T-cell (primary cell): ENCODE measurements at regions of chr14 and their contacts with region 1.

Region 1: DNA sequence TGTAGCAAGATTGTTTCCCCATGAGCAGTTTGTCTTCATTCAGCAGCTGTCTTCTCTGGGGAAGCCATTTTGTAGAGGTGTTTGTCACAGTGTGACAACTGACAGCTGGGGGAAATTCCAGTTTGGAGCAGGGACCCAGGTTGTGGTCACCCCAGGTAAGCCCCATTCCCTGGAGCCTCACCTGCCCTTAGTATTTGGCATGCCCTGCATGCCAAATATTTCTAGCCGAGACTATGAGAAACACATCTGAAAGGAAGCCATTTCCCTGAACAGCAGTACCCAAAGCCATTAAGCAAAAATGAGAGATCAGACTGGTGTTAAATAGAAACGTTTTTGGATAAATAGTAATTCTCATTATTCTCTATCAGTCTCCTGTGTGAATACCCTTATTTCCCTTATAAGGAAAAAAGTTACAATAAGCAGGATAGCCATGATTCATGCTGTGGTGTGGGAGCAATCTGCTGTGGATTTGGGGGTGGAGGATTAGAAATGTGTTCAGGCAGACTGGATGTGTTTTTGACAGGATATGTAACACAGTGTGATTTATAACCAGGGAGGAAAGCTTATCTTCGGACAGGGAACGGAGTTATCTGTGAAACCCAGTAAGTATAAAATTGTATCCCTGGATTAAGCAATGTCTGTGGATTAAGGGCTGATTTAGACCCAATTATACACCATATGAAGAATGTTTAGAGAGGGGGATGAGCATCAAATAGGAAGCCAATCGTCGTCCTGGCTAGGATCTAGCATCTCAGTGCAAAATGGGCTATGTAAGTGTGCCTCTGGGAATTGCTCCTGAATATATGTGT is 68.9 kb downstream of the DAD1 start:
- DNase-seq: peak in 1 of 35 experiments; percentile 49
- ATAC-seq: peak; percentile 17 to 34 (median 22)
- H3K4me3 ChIP-seq: peak overlapping the region; percentile 47 to 60
- H3K4me3 Mint-ChIP-seq: peak overlapping the region; percentile 82 to 86 (median 84)
- H3K27ac ChIP-seq: peak overlapping the region; percentile 90
- H3K27ac Mint-ChIP-seq: peak overlapping the region; percentile 99
- H3K4me1 ChIP-seq: peaks cover 78 to 79% of the 10 kb centered on the region in 2 experiments
- H3K4me1 Mint-ChIP-seq: peaks cover 95 to 99% (median 96%) of the 10 kb centered on the region in 3 donors
- H3K27me3 ChIP-seq: no peaks in the 10 kb centered on the region
- H3K27me3 Mint-ChIP-seq: no peaks in the 10 kb centered on the region

Region 2: DNA sequence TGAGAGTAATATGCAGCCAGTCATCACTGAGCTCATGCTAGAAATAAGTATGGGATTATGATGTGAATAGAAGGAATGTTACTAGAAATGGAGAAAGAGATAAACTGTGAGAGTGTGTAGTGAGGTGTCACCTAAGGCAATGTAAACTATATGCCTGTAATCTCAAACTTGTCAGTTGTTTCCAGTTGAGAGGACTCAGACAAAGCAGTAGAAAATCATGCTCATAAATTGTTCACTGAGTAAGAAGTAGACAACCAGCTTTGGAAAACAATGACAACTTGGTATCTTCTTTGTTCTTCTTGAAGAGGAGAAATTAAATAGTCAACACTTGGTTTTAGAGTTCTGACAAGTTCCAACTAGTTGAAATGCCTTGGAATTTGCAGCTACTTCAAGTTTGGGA is 698.0 kb before region 1 on chr14:
- CTCF ChIA-PET with region 1: no interaction called
- POLR2A ChIA-PET with region 1: interaction called in 1 of 2 experiments, 12 read pairs
- DNase-seq: no peak
- ATAC-seq: no peak
- H3K4me3 ChIP-seq: no peak overlapping the region
- H3K4me3 Mint-ChIP-seq: no peak overlapping the region
- H3K27ac ChIP-seq: no peak overlapping the region
- H3K27ac Mint-ChIP-seq: no peak overlapping the region
- H3K4me1 ChIP-seq: no peaks in the 10 kb centered on the region
- H3K4me1 Mint-ChIP-seq: peaks cover 4 to 11% (median 6%) of the 10 kb centered on the region in 3 donors
- H3K27me3 ChIP-seq: peaks cover 0 to 2% of the 10 kb centered on the region in 2 experiments
- H3K27me3 Mint-ChIP-seq: peaks cover 21 to 25% of the 10 kb centered on the region in 2 donors

Region 3: GRCh38 chr14:22505697-22506377 is 14.2 kb before region 1 on chr14:
- CTCF ChIA-PET with region 1: interaction called, 8 to 11 read pairs
- POLR2A ChIA-PET with region 1: interaction called, 11 to 45 read pairs
- DNase-seq: peak in 1 of 35 experiments; percentile 54
- ATAC-seq: peak; percentile 17 to 55 (median 46)
- H3K4me3 ChIP-seq: peak overlapping the region; percentile 52 to 58
- H3K4me3 Mint-ChIP-seq: peak overlapping the region; percentile 82 to 86 (median 83)
- H3K27ac ChIP-seq: peak overlapping the region; percentile 90
- H3K27ac Mint-ChIP-seq: peak overlapping the region; percentile 95 to 96
- H3K4me1 ChIP-seq: peaks cover 26 to 55% of the 10 kb centered on the region in 2 experiments
- H3K4me1 Mint-ChIP-seq: peaks cover 55 to 84% (median 75%) of the 10 kb centered on the region in 3 donors
- H3K27me3 ChIP-seq: no peaks in the 10 kb centered on the region
- H3K27me3 Mint-ChIP-seq: no peaks in the 10 kb centered on the region

Region 4: DNA sequence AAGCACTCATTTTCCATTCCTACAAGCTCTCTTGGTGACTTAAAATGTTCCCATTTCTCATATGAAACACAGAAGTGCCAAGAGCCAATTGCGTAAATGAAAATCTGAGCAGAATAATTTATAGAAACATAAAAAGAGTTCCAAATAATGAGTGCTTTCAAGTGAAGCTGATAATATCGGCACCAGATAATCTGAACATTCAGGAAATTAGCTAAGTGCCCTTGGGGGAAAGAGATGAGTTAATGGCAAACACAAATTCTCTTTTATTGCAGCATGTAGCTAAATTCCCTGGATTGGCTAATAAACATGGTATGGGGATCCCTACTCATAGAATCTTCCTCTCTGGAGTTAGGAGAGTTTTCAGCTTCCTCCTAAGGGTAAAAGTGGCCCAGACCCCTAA is 22.3 kb after region 1 on chr14:
- CTCF ChIA-PET with region 1: interaction called, 6 read pairs
- POLR2A ChIA-PET with region 1: interaction called, 4 to 10 read pairs
- DNase-seq: no peak
- ATAC-seq: no peak
- H3K4me3 ChIP-seq: peak overlapping the region; percentile 35 to 38
- H3K4me3 Mint-ChIP-seq: peak overlapping the region; percentile 77 to 86 (median 83)
- H3K27ac ChIP-seq: peak overlapping the region; percentile 88
- H3K27ac Mint-ChIP-seq: peak overlapping the region; percentile 98 to 99
- H3K4me1 ChIP-seq: peaks cover 92 to 95% of the 10 kb centered on the region in 2 experiments
- H3K4me1 Mint-ChIP-seq: peaks cover 98 to 100% (median 100%) of the 10 kb centered on the region in 3 donors
- H3K27me3 ChIP-seq: no peaks in the 10 kb centered on the region
- H3K27me3 Mint-ChIP-seq: no peaks in the 10 kb centered on the region

Region 5: GRCh38 chr14:22556990-22557623 is 37.0 kb after region 1 on chr14:
- CTCF ChIA-PET with region 1: interaction called in 1 of 2 experiments, 11 read pairs
- POLR2A ChIA-PET with region 1: interaction called, 3 to 6 read pairs
- DNase-seq: peak; percentile 69 to 96 (median 89)
- ATAC-seq: peak; percentile 21 to 38 (median 29)
- H3K4me3 ChIP-seq: peak overlapping the region; percentile 47 to 58
- H3K4me3 Mint-ChIP-seq: peak overlapping the region; percentile 64 to 83 (median 79)
- H3K27ac ChIP-seq: peak overlapping the region; percentile 99
- H3K27ac Mint-ChIP-seq: peak overlapping the region; percentile 98 to 99
- H3K4me1 ChIP-seq: peaks cover 66 to 100% of the 10 kb centered on the region in 2 experiments
- H3K4me1 Mint-ChIP-seq: peaks cover 90 to 96% (median 91%) of the 10 kb centered on the region in 3 donors
- H3K27me3 ChIP-seq: no peaks in the 10 kb centered on the region
- H3K27me3 Mint-ChIP-seq: peaks cover 0 to 2% of the 10 kb centered on the region in 2 donors